Activated CD4-positive, alpha-beta T cell treated with anti-CD3 and anti-CD28 coated beads for 36 hours (primary cell): ENCODE measurements at regions of chr5 and their contacts with region 1.

Region 1: GRCh38 chr5:134086943-134087305 is 27.6 kb upstream of the TCF7 start:
- DNase-seq: peak; percentile 90
- ATAC-seq: peak; percentile 87
- H3K4me3 Mint-ChIP-seq: peak overlapping the region; percentile 46
- H3K27ac Mint-ChIP-seq: peak overlapping the region; percentile 93
- H3K4me1 Mint-ChIP-seq: peaks cover 84% of the 10 kb centered on the region
- H3K27me3 Mint-ChIP-seq: peaks cover 1% of the 10 kb centered on the region

Region 2: DNA sequence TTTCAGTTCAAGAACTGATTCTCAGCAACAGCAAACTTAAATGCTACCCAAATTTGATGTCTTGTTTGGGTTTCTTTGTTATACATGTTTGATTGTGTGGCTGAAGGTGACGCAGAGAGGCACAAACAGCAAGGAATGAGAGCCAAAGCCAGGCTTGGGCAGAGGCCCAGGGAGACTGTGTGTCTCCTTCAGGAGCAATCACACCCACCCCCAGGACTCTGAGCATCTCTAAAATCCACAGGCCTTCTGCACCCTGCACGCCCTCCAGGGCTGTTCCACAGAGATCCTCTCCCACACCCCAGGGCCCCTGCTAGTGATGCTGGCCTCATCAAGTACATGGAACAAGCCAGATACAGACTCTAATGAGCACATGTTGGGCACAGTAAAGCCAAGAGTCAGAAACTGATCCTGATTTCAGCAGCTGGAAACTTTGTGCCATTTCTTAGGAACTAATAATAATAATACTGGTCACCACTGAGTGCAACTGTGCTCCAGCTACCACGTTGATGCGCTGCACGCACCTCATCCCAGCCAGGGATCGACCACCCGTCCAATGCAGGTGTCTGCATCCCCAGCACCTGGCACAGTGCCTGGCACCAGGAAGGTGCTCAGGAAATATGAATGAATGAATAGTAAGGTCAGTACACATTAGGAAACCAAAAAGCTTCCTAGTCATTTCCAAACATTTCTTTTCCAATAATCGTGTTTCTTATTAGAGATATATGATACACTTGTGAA is 27.0 kb before region 1 on chr5:
- CTCF ChIA-PET with region 1: no interaction called
- POLR2A ChIA-PET with region 1: no interaction called
- intact Hi-C with region 1: no loop called
- DNase-seq: no peak
- ATAC-seq: no peak
- H3K4me3 Mint-ChIP-seq: no peak overlapping the region
- H3K27ac Mint-ChIP-seq: no peak overlapping the region
- H3K4me1 Mint-ChIP-seq: peaks cover 18% of the 10 kb centered on the region
- H3K27me3 Mint-ChIP-seq: no peaks in the 10 kb centered on the region

Region 3: DNA sequence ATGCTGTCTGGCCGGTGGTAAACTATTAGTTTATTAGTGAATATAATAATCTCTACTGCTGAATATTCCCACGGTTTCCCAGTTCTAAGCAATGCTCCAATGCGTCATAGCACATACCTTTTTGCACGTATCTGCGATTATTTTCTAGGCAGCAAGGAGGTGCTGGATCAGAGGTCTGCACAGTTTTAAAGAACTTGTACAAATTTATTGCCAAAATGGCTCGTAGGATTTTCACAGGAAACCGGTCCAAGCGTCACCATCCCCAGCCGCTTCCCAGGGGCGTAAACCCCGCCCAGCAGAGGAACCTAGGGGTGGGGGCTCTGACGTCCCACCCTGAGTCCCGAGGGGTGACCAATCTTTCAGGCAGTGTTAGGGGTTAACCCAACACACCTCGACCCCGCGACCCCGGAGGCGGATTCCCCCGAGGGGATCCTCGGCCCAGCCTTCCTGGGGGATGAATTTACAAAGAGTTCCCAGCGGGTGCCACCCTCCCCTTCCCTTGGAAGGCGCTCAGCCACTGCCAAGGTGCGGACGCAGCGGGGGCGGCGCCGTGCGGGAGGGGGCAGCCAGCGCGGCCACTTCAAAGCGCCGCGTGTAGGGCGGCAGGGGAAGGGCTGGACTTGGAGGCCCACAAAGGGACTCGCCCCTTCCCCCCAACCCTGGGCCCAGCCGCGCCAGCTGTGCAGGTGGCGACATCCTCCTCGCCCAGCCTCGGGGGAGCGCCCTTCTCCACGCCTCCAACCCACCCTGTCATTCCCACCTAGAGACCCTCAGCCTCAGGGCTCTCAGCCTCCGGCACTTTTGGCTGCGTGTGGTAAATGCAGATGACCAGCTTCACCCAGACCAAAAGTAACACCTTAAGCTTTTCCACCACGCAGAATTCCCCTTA is 16.0 kb before region 1 on chr5:
- CTCF ChIA-PET with region 1: interaction called, 31 read pairs
- POLR2A ChIA-PET with region 1: interaction called, 3 read pairs
- intact Hi-C with region 1: loop called (anchors 1 kb)
- DNase-seq: peak; percentile 77
- ATAC-seq: peak; percentile 1
- H3K4me3 Mint-ChIP-seq: peak overlapping the region; percentile 73
- H3K27ac Mint-ChIP-seq: peak overlapping the region; percentile 89
- H3K4me1 Mint-ChIP-seq: peaks cover 68% of the 10 kb centered on the region
- H3K27me3 Mint-ChIP-seq: no peaks in the 10 kb centered on the region

Region 4: DNA sequence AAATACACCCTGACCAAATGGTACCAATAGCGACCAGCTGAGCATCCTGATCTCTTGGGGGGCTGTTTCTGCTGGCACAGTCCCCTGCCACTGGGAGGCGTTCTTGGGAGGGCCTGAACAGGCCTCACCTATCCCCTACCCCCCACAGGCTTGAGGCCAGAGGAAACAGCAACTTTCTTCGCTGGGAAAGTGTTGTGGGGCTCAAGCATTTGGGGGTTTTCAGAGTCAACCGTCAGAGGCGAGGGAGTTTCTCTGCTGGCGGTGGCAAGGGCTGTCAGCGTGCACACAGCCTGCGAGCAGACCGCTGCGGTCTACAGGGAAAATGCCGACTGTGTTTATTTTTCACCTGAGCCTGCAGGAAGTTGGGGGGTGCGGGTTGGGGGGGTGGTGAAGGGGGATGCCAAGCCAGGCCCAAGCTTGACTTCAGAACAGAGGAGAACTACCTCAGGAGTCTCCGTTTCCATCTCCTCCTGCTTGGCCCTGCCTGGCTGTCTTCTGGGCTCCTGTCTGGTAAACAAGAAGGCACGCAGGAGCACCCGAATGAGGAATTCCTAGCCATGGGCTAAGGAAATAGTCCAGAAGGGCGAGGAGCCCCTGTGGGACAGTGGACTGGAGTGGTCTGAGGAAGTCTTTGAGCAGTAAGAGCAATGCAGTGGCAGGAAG is 45.6 kb after region 1 on chr5:
- CTCF ChIA-PET with region 1: interaction called, 4 read pairs
- POLR2A ChIA-PET with region 1: interaction called, 10 read pairs
- intact Hi-C with region 1: loop called in 1 of 2 experiments (anchors 5 kb)
- DNase-seq: peak; percentile 86
- ATAC-seq: peak; percentile 60
- H3K4me3 Mint-ChIP-seq: peak overlapping the region; percentile 41
- H3K27ac Mint-ChIP-seq: peak overlapping the region; percentile 87
- H3K4me1 Mint-ChIP-seq: peaks cover 98% of the 10 kb centered on the region
- H3K27me3 Mint-ChIP-seq: no peaks in the 10 kb centered on the region

Region 5: GRCh38 chr5:134153657-134154056 is 66.7 kb after region 1 on chr5:
- CTCF ChIA-PET with region 1: no interaction called
- POLR2A ChIA-PET with region 1: no interaction called
- intact Hi-C with region 1: no loop called
- DNase-seq: no peak
- ATAC-seq: peak; percentile 55
- H3K4me3 Mint-ChIP-seq: no peak overlapping the region
- H3K27ac Mint-ChIP-seq: peak overlapping the region; percentile 69
- H3K4me1 Mint-ChIP-seq: peaks cover 70% of the 10 kb centered on the region
- H3K27me3 Mint-ChIP-seq: no peaks in the 10 kb centered on the region